Colonic mucosa (tissue), 4 donors: ENCODE measurements at regions of chr17 and their contacts with region 1.

Region 1: GRCh38 chr17:18960803-18961511 is 9.0 kb downstream of the SLC5A10 start:
- DNase-seq: peak; percentile 90
- H3K4me3 ChIP-seq: no peak overlapping the region
- H3K27ac ChIP-seq: no peak overlapping the region
- H3K4me1 ChIP-seq: no peaks in the 10 kb centered on the region
- H3K27me3 ChIP-seq: no peaks in the 10 kb centered on the region
- CTCF ChIP-seq: peak; percentile 94

Region 2: DNA sequence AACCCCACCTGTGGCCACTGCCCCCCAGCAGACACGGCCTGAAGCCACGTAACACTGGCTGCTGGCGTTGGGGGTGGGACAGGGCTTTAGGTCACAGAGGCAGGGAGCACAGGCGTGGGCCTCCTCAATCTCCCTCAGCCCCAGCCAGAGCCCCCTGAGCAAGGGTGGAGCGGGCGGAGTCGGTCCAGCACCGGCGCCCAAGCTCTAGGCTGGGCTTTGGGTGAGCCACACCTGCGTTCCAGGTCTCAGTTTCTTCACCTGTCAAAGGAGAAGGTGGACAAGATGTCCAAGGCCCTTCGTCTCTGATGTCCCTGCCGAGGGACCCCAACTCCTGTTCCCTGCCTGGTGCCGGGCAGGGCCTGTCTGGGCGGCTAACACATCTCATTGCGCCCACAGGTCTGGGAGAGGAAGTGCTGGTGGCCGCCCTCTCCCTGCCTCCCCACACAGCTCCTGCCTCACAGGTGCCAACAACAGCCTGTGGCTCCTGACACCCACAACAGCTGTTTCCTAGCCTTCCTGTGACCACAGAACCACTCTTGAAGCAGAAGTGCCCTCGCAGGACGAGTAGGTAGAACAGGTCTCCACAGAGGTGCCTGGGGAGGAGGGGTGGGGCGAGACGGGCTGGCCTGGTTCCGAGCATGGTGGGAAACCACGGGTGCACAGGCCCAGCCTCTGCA is 31.6 kb after region 1 on chr17:
- intact Hi-C with region 1: no loop called
- DNase-seq: no peak
- H3K4me3 ChIP-seq: no peak overlapping the region
- H3K27ac ChIP-seq: no peak overlapping the region
- H3K4me1 ChIP-seq: peaks cover 12% of the 10 kb centered on the region
- H3K27me3 ChIP-seq: no peaks in the 10 kb centered on the region
- CTCF ChIP-seq: no peak

Region 3: GRCh38 chr17:19024101-19025078 is 63.4 kb after region 1 on chr17:
- intact Hi-C with region 1: loop called (anchors 10 kb)
- DNase-seq: no peak
- H3K4me3 ChIP-seq: no peak overlapping the region
- H3K27ac ChIP-seq: no peak overlapping the region
- H3K4me1 ChIP-seq: no peaks in the 10 kb centered on the region
- H3K27me3 ChIP-seq: no peaks in the 10 kb centered on the region
- CTCF ChIP-seq: no peak